HEK293 (cell line): ENCODE measurements at regions of chr22 and their contacts with region 1.

Region 1: GRCh38 chr22:20418211-20418788 is 19.3 kb downstream of the SCARF2 start:
- H3K4me3 ChIP-seq: peak overlapping the region; percentile 40
- H3K27ac ChIP-seq: no peak overlapping the region
- H3K4me1 ChIP-seq: no peaks in the 10 kb centered on the region
- CTCF ChIP-seq: peak; percentile 96

Region 2: GRCh38 chr22:20405931-20406685 is 12.2 kb before region 1 on chr22:
- CTCF ChIA-PET with region 1: interaction called, 26 read pairs
- POLR2A ChIA-PET with region 1: interaction called, 5 read pairs
- H3K4me3 ChIP-seq: no peak overlapping the region
- H3K27ac ChIP-seq: no peak overlapping the region
- H3K4me1 ChIP-seq: no peaks in the 10 kb centered on the region
- CTCF ChIP-seq: no peak

Region 3: DNA sequence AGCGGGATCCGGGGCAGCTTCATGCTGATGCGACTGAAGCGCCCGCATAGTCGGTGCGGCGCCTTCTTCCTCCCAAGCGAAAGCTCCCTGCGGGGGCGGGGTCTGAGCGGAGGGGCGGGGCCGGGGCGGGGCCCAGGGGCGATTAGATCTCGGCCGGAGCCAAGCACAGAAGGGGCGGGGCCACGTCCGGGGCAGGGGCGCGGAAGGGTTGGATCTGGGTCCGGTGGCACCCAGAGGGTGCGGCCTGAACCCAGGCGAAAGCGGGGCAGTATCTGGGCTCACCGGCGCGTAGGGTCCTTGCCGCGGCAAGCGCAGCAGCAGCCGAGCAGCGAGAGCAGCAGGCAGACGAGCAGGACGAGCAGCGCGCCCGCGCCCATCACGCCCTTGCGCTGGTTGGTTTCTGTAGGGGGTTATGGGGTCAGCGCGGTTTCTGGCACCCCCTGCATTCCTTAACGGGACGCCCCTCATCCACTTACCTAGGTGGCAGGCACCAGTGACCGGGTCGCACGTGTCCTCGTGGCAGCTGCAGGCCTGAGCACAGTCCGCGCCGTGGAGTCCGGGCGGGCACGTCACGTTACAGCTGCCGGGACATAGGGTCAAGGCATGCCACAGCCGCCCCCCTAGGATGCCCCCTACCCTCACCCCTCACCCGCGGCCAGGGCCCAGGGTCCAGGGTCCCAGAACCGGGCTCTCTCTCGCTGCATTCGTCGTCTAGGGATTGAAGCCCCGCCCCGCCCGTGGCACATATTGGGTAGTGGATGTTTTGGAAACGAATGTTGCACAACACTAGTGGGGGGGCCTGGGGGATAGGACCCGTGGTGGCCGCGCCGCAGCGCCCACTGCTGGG is 11.2 kb after region 1 on chr22:
- CTCF ChIA-PET with region 1: interaction called, 18 read pairs
- POLR2A ChIA-PET with region 1: interaction called, 3 read pairs
- H3K4me3 ChIP-seq: no peak overlapping the region
- H3K27ac ChIP-seq: no peak overlapping the region
- H3K4me1 ChIP-seq: no peaks in the 10 kb centered on the region
- CTCF ChIP-seq: no peak

Region 4: DNA sequence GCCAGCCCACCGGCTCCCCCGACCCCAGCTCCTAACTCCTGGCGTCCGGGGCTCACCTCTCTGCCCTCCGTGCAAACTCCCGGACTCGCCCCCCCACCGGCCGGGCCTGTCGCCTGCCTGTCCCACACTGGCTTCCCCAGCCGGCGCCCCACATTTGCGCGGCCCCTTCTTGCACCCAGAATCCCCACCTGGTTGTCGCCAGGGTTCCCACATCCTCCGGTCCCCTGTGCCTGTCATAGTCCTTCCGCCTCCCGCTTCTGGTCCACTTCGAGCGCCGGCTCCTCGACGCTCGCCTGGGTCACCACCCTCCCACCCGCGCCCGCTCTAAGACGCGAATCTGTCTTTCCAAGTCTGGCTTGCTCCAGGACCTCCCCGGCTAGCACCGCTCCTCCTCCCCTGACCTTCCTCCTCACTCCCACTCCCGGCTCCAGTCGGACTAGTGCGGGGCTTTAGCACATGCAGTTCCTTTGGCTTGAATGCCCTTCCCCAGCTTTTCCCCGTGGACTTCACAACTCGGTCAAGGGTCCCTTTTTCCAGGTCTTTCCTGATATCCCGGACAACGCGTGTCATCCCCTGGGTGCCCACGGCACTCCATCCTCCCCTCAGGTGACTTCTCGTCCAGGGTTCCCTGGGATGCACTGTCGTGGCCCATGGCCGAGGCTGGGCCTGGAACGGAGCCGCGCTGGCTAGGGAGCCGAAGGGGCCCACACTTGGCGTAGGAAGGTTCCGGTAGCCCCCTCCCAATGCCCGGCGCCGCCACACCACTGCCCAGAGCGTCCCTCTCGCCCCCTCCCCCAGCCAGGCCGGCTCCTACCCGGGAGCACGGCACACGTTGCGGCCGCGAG is 18.7 kb after region 1 on chr22:
- CTCF ChIA-PET with region 1: interaction called, 18 read pairs
- POLR2A ChIA-PET with region 1: interaction called, 4 read pairs
- H3K4me3 ChIP-seq: peak overlapping the region; percentile 80
- H3K27ac ChIP-seq: peak overlapping the region; percentile 51; the same call in 1 of the 2 replicates
- H3K4me1 ChIP-seq: no peaks in the 10 kb centered on the region
- CTCF ChIP-seq: no peak